ENCODE measurements at regions of chr2 and their contacts with region 1.

Region 1: DNA sequence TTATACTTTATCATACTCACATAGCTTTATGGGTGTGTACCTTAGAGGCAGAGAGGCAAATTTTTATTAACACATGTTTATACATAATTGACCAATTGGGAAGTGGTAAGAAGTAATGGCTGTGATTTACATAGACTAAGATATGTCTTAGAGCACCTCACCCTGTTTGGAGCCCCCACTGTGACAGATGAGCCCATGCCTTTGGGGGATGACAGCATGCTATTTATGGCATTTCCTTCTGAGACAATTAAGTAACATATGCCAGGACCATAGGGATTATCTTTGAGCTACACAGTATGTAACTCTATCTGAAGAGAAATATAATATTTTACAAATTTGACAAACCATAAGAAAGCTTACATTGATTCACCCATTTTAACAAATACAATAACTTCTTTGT is 1655.3 kb upstream of the ACVR2A start:
- DNase-seq: no peak
- ATAC-seq: no peak
- H3K4me3 ChIP-seq: no peak overlapping the region
- H3K4me3 Mint-ChIP-seq: no peak overlapping the region
- H3K27ac ChIP-seq: no peak overlapping the region
- H3K27ac Mint-ChIP-seq: no peak overlapping the region
- H3K4me1 ChIP-seq: no peaks in the 10 kb centered on the region
- H3K4me1 Mint-ChIP-seq: no peaks in the 10 kb centered on the region
- H3K27me3 ChIP-seq: no peaks in the 10 kb centered on the region
- H3K27me3 Mint-ChIP-seq: no peaks in the 10 kb centered on the region
- CTCF ChIP-seq: no peak

Region 2: DNA sequence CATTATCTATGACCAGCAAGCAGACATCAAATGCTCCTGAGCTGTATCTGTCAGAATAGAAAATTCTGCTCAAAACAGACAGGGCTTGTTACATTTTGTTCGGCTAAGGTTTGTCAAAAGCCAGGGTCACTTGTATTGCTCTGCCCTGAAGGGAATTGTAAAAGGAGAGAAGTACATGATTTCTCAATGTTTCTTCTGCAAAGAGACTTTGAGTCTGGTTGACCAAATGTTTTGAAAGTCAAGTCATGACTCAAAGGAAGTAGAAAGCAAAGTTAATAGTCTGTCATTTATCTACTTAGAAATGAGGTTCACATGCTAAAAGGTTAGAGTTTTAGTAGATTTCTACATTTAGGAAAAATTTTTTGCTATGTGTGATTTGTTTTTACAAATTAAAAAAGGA is 45.6 kb before region 1 on chr2:
- CTCF ChIA-PET with region 1: no interaction called
- POLR2A ChIA-PET with region 1: no interaction called
- intact Hi-C with region 1: loop called in 1 of 2 experiments (anchors 1 kb)
- DNase-seq: no peak
- ATAC-seq: no peak
- H3K4me3 ChIP-seq: no peak overlapping the region
- H3K4me3 Mint-ChIP-seq: no peak overlapping the region
- H3K27ac ChIP-seq: no peak overlapping the region
- H3K27ac Mint-ChIP-seq: no peak overlapping the region
- H3K4me1 ChIP-seq: no peaks in the 10 kb centered on the region
- H3K4me1 Mint-ChIP-seq: no peaks in the 10 kb centered on the region
- H3K27me3 ChIP-seq: no peaks in the 10 kb centered on the region
- H3K27me3 Mint-ChIP-seq: no peaks in the 10 kb centered on the region
- CTCF ChIP-seq: no peak

Region 3: DNA sequence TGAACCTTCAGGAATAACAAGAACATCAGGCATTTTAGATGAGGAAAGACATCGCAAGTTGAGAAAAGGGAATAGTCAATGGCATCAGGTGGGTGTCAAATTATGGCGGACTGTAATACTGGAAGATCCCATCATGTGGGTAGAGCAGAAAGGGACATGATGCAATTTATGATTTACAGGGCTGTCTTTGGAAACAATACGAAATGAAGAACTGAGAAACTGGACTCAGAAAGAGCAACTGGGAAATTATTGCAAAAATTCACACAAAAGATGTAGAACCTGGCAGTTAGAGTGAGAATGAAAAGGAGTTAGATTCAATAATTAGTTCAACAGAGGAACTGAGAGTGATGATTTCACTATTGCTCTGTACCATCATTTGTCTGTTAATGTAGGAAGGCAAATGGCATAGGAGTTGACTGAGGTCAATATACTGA is 20.3 kb after region 1 on chr2:
- CTCF ChIA-PET with region 1: no interaction called
- POLR2A ChIA-PET with region 1: no interaction called
- intact Hi-C with region 1: no loop called
- DNase-seq: no peak
- ATAC-seq: no peak
- H3K4me3 ChIP-seq: no peak overlapping the region
- H3K4me3 Mint-ChIP-seq: no peak overlapping the region
- H3K27ac ChIP-seq: no peak overlapping the region
- H3K27ac Mint-ChIP-seq: no peak overlapping the region
- H3K4me1 ChIP-seq: no peaks in the 10 kb centered on the region
- H3K4me1 Mint-ChIP-seq: no peaks in the 10 kb centered on the region
- H3K27me3 ChIP-seq: no peaks in the 10 kb centered on the region
- H3K27me3 Mint-ChIP-seq: no peaks in the 10 kb centered on the region
- CTCF ChIP-seq: no peak